ENCODE measurements at regions of chr5 and their contacts with region 1.

Region 1: DNA sequence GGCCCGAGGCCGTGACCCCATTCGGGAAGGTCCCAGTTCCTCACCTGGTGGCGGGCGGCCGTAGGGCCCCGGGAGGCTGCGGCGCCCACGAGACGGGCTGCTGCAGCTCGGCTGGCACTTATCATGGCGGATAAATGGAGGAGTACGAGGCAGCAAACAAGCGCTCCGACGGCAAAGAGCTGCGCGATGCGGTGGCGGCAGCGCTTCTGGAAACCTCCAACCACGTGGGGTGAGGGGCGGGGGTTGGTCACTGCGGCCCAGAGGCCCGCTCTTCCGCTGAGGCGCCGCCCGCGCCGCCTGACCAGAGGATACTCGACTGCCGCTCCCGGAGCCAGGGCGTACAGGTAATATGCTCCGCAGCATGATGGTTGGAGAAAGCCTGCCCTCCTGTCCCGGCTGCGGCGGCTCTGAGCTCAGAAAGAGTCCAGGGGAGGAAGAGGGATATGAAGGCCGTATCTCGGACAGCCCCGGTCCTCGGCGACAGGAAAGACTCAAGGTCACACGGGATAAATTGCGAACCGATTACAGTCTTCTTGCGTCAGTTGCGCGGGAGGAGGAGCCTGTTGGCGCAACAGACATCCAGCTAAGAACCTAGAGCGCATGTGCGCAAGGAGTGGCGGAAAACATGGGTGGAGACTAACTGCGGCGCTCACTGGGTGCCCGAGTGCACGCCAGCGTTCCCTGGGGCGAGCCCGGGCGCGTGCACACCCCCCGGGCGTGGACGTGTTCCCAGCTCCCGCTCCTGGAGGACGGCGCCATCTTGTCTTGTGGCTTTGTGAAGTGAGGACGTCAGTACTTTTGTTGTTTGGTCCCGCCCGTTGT is at the start of gene HSPA9:
- DNase-seq: peak; percentile 97
- H3K4me3 Mint-ChIP-seq: peak within 1 kb of the TSS; percentile 90
- H3K27ac Mint-ChIP-seq: peak within 1 kb of the TSS; percentile 99
- H3K4me1 Mint-ChIP-seq: peaks cover 14% of the 10 kb centered on the region
- H3K27me3 Mint-ChIP-seq: no peaks in the 10 kb centered on the region
- total RNA-seq, gene HSPA9: 333 and 340 TPM in 2 replicates

Region 2: GRCh38 chr5:138337685-138338410 is 237.6 kb before region 1 on chr5 and contains the start of gene FAM53C:
- intact Hi-C with region 1: no loop called
- DNase-seq: peak; percentile 91
- H3K4me3 Mint-ChIP-seq: peak within 1 kb of the TSS; percentile 91
- H3K27ac Mint-ChIP-seq: peak within 1 kb of the TSS; percentile 98
- H3K4me1 Mint-ChIP-seq: peaks cover 37% of the 10 kb centered on the region
- H3K27me3 Mint-ChIP-seq: no peaks in the 10 kb centered on the region
- total RNA-seq, gene FAM53C: 24.4 and 26.1 TPM in 2 replicates

Region 3: GRCh38 chr5:138542956-138543729 is 32.3 kb before region 1 on chr5 and contains the start of gene ETF1:
- intact Hi-C with region 1: loop called (anchors 1 kb)
- DNase-seq: peak; percentile 100
- H3K4me3 Mint-ChIP-seq: peak within 1 kb of the TSS; percentile 100
- H3K27ac Mint-ChIP-seq: peak within 1 kb of the TSS; percentile 100
- H3K4me1 Mint-ChIP-seq: peaks cover 56% of the 10 kb centered on the region
- H3K27me3 Mint-ChIP-seq: no peaks in the 10 kb centered on the region
- total RNA-seq, gene ETF1: 169 and 170 TPM in 2 replicates

Region 4: GRCh38 chr5:138654281-138654867 is 79.0 kb after region 1 on chr5:
- intact Hi-C with region 1: loop called (anchors 2 kb)
- DNase-seq: peak; percentile 53
- H3K4me3 Mint-ChIP-seq: peak overlapping the region; percentile 9
- H3K27ac Mint-ChIP-seq: peak overlapping the region; percentile 91
- H3K4me1 Mint-ChIP-seq: peaks cover 26% of the 10 kb centered on the region
- H3K27me3 Mint-ChIP-seq: peaks cover 78% of the 10 kb centered on the region

Region 5: DNA sequence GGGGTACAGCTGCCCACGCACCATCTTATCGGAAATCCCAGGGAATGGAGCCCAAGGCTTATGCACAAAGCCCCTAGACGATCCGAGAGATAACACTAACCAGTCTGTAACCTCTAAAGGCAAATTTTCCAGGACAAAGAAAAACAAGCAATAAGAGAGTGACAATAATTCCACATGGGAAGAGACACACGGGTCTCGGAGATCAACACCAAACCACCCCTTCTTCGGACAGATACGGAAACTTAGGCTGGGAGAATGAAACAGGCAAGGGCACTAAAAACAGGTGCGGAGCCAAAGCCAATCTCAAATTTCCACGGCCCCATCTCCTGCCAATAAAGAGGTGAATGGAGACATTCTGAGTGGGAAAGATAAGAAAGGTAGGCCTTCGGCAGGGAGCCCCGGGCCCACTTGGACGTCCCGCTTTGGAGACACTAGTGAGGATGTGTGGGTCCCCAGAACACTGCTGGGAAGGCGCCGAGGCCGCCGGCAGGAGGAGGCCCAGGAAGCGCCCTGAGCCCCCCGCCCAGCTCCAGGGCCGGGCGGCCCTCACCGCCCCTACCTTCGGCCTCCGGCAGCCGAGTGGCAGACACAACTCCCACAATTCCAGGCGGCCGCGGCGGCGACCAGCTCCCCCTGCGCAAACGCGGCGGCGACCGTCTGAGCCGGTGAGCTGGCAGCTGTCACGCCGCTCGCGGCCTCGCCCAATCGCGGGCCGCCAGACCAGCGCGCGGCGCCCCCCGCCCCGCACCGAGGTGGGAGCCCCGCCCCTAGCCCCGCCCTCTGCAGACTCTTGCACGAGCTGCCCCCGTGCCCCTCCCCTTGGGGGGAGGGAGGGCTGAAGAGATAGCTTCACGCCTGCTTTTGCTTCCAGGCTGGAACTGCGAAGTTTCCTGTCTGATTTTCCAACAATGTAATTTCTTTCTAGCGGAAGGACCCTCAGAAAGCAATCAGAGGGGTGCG is 622.6 kb after region 1 on chr5 and contains the start of gene SIL1:
- intact Hi-C with region 1: loop called (anchors 5 kb)
- DNase-seq: peak; percentile 93
- H3K4me3 Mint-ChIP-seq: peak within 1 kb of the TSS; percentile 92
- H3K27ac Mint-ChIP-seq: peak within 1 kb of the TSS; percentile 84
- H3K4me1 Mint-ChIP-seq: peaks cover 21% of the 10 kb centered on the region
- H3K27me3 Mint-ChIP-seq: no peaks in the 10 kb centered on the region
- total RNA-seq, gene SIL1: 31.1 and 37.8 TPM in 2 replicates

Region 6: DNA sequence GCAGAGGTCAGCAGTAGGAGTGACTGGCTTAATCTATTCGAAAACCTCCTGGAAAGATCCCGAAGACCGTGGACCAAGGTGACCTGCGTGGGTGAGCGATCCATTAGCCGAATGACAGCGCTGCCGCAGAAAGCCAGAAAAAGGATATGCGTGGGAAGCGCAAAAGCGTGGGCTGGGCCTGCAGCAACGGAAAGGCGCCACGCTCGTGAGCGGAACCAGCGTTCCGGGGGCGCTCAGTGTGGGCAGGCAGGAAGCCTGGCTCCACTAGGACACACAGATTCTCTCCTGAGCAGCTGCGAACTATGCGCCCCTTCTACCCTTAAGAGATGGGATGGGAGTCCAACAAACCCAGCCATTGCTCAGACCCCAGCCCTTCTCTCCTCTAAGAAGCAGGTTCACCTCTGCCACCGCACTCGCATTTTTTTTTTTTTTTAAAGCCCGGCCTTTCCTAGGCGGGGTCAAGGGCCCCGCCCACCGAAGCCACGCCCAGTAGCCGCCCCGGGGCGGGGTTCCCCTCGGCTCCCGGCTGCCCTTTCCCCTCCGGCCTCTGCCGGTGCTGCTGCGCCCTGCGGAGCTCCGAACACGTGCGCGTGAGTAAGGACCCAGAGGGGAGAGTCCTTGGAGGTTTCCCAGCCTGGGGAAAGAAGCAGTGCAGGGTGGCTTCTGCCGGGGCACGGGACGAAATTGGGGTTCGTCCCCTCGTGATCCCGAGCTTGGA is 698.3 kb after region 1 on chr5:
- intact Hi-C with region 1: loop called (anchors 1 kb)
- DNase-seq: peak; percentile 88
- H3K4me3 Mint-ChIP-seq: peak overlapping the region; percentile 94
- H3K27ac Mint-ChIP-seq: peak overlapping the region; percentile 42
- H3K4me1 Mint-ChIP-seq: peaks cover 42% of the 10 kb centered on the region
- H3K27me3 Mint-ChIP-seq: no peaks in the 10 kb centered on the region

Region 7: GRCh38 chr5:139392678-139393496 is 817.5 kb after region 1 on chr5:
- intact Hi-C with region 1: loop called (anchors 5 kb)
- DNase-seq: peak; percentile 84
- H3K4me3 Mint-ChIP-seq: peak overlapping the region; percentile 96
- H3K27ac Mint-ChIP-seq: peak overlapping the region; percentile 97
- H3K4me1 Mint-ChIP-seq: peaks cover 51% of the 10 kb centered on the region
- H3K27me3 Mint-ChIP-seq: no peaks in the 10 kb centered on the region